Activated CD8-positive, alpha-beta T cell treated with anti-CD3 and anti-CD28 coated beads for 36 hours (primary cell): ENCODE measurements at regions of chr12 and their contacts with region 1.

Region 1: DNA sequence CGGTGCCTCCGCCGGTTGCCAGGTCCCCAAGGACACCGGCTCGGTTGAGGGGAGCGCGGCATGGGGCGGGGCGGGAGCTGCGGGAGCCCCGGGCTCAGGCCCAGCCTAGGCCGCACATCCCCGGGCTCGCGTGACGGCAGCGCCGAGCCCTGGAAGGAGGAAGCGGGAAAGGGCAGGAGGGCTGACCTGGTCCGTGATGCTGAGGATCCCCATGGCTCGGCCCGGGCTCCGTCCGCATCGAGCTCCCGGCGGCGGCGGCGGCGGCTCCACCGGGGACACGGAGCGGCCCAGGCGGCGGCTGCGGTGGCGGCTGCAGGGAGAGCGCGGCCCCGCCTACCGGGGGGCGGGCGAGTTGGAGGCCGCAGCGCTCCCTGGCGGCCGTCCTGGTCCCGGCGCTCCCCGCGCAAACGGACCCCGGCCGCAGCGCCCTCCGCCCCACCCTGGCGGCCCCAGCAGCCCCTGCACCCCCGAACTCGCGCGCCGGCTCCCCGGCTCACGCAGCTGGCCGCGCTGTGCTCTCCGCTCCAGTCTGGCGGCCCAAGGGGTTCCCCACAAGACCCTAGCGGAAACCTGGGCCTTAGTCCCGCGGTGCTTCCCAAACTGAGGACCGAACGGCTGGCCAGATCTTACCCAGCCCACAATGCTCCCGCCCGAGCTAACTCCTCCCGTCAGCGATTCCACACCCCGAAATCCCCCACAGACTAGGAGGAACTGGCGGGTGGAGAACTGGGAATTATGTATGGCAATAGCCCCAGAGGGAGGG is at the start of gene ANKRD52:
- DNase-seq: peak; percentile 81
- ATAC-seq: peak; percentile 94
- H3K4me3 Mint-ChIP-seq: peak within 1 kb of the TSS; percentile 88
- H3K27ac Mint-ChIP-seq: peak within 1 kb of the TSS; percentile 87
- H3K4me1 Mint-ChIP-seq: peaks cover 19% of the 10 kb centered on the region
- H3K27me3 Mint-ChIP-seq: no peaks in the 10 kb centered on the region
- CTCF ChIP-seq: peak; percentile 80
- total RNA-seq, gene ANKRD52: 23.3 to 31.3 TPM

Region 2: GRCh38 chr12:56074396-56074795 is 183.8 kb before region 1 on chr12:
- CTCF ChIA-PET with region 1: no interaction called
- POLR2A ChIA-PET with region 1: no interaction called
- intact Hi-C with region 1: no loop called
- DNase-seq: no peak
- ATAC-seq: no peak
- H3K4me3 Mint-ChIP-seq: no peak overlapping the region
- H3K27ac Mint-ChIP-seq: no peak overlapping the region
- H3K4me1 Mint-ChIP-seq: no peaks in the 10 kb centered on the region
- H3K27me3 Mint-ChIP-seq: no peaks in the 10 kb centered on the region
- CTCF ChIP-seq: no peak

Region 3: GRCh38 chr12:56127888-56128669 is 130.2 kb before region 1 on chr12 and contains the start of gene ESYT1:
- CTCF ChIA-PET with region 1: interaction called, 5 read pairs
- POLR2A ChIA-PET with region 1: no interaction called
- intact Hi-C with region 1: loop called (anchors 10 kb)
- DNase-seq: peak; percentile 99
- ATAC-seq: peak; percentile 92
- H3K4me3 Mint-ChIP-seq: peak within 1 kb of the TSS; percentile 84
- H3K27ac Mint-ChIP-seq: peak within 1 kb of the TSS; percentile 93
- H3K4me1 Mint-ChIP-seq: peaks cover 53% of the 10 kb centered on the region
- H3K27me3 Mint-ChIP-seq: no peaks in the 10 kb centered on the region
- CTCF ChIP-seq: no peak
- total RNA-seq, gene ESYT1: 154 to 160 TPM

Region 4: GRCh38 chr12:56206457-56207166 is 51.6 kb before region 1 on chr12:
- CTCF ChIA-PET with region 1: interaction called, 15 read pairs
- POLR2A ChIA-PET with region 1: interaction called, 4 read pairs
- intact Hi-C with region 1: no loop called
- DNase-seq: peak; percentile 67
- ATAC-seq: peak; percentile 80
- H3K4me3 Mint-ChIP-seq: no peak overlapping the region
- H3K27ac Mint-ChIP-seq: no peak overlapping the region
- H3K4me1 Mint-ChIP-seq: peaks cover 4% of the 10 kb centered on the region
- H3K27me3 Mint-ChIP-seq: no peaks in the 10 kb centered on the region
- CTCF ChIP-seq: peak; percentile 36

Region 5: GRCh38 chr12:56224102-56224701 is 34.0 kb before region 1 on chr12 and contains the start of gene NABP2:
- CTCF ChIA-PET with region 1: interaction called, 24 read pairs
- POLR2A ChIA-PET with region 1: interaction called, 16 read pairs
- intact Hi-C with region 1: no loop called
- DNase-seq: peak; percentile 97
- ATAC-seq: peak; percentile 81
- H3K4me3 Mint-ChIP-seq: peak within 1 kb of the TSS; percentile 98
- H3K27ac Mint-ChIP-seq: peak within 1 kb of the TSS; percentile 87
- H3K4me1 Mint-ChIP-seq: peaks cover 27% of the 10 kb centered on the region
- H3K27me3 Mint-ChIP-seq: no peaks in the 10 kb centered on the region
- CTCF ChIP-seq: peak; percentile 89
- total RNA-seq, gene NABP2: 58.7 to 60.2 TPM

Region 6: DNA sequence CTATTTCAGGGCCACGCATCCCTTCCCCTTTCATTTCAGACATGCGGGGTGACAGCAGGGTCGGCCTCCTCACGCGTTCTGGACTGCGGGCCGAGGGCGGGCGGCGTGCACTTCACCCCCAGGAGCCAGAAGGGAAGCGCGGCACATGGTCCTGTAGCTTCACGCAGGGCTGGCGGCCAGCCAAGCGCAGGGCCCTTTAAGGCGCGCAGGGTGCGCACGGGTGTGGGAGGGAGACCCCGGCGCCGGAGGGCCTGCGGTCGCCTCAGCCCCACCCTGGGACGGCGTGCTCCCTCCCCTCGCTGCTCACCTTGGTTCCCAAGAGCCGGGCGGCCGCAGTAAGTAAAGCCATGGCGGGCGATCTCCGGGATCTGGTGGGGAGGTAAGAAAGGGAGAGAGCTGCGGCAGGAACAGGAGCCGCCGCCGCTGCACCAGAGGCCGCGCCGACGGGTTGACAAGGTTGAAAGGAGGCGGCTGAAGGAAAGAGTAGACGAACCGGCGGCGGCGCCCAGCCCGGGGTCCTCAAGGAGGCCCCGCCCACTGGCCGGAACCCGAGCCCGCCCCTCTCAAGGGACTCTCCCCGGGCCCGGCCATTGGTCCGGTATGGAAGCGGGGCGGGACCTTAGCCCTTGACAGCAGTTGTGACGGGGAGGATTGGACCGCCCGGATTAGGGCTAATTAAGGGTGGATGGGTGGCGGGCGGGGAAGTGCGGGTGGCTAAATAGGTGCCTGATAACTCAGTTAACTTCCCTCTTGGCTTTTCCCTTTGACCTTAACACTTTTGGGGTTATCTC is 41.8 kb after region 1 on chr12 and contains the start of gene CS:
- CTCF ChIA-PET with region 1: interaction called, 8 read pairs
- POLR2A ChIA-PET with region 1: interaction called, 10 read pairs
- intact Hi-C with region 1: no loop called
- DNase-seq: peak; percentile 99
- ATAC-seq: peak; percentile 99
- H3K4me3 Mint-ChIP-seq: peak within 1 kb of the TSS; percentile 93
- H3K27ac Mint-ChIP-seq: peak within 1 kb of the TSS; percentile 94
- H3K4me1 Mint-ChIP-seq: peaks cover 43% of the 10 kb centered on the region
- H3K27me3 Mint-ChIP-seq: no peaks in the 10 kb centered on the region
- CTCF ChIP-seq: no peak
- total RNA-seq, gene CS: 292 to 297 TPM

Region 7: GRCh38 chr12:56315622-56316473 is 57.6 kb after region 1 on chr12 and contains the start of gene CNPY2:
- CTCF ChIA-PET with region 1: interaction called, 11 read pairs
- POLR2A ChIA-PET with region 1: interaction called, 10 read pairs
- intact Hi-C with region 1: no loop called
- DNase-seq: peak; percentile 98
- ATAC-seq: peak; percentile 91
- H3K4me3 Mint-ChIP-seq: peak within 1 kb of the TSS; percentile 85
- H3K27ac Mint-ChIP-seq: peak within 1 kb of the TSS; percentile 92
- H3K4me1 Mint-ChIP-seq: peaks cover 9% of the 10 kb centered on the region
- H3K27me3 Mint-ChIP-seq: no peaks in the 10 kb centered on the region
- CTCF ChIP-seq: no peak
- total RNA-seq, gene CNPY2: 81.0 to 81.7 TPM